ENCODE measurements at regions of chr12 and their contacts with region 1.

Region 1: DNA sequence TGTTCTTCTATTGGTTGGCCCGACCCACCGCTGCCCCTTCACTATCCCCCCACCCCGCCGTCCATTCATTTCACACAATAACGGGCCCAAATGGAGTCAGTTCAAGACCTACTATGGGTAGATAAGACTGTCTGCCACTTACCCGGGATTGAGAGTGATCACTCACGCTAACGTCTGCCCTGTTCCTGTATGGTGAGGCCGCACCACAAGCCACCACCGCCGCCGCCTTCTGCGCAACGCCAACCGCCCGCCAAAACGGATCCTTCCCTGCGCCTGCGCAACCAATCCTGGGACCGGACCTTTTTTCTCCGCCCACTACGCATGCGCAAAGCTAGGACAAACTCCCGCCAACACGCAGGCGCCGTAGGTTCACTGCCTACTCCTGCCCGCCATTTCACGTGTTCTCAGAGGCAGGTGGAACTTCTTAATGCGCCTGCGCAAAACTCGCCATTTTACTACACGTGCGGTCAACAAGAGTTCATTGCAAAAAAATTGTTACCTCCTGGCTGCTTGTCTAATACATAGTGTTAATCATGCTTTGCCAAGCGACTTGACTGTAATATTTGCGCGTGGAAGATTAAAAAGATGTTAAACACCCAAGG is at the start of gene CBX5:
- DNase-seq: peak; percentile 99
- H3K4me3 Mint-ChIP-seq: no peak within 1 kb of the TSS
- H3K27ac Mint-ChIP-seq: no peak within 1 kb of the TSS
- H3K4me1 Mint-ChIP-seq: peaks cover 23% of the 10 kb centered on the region
- H3K27me3 Mint-ChIP-seq: no peaks in the 10 kb centered on the region
- CTCF ChIP-seq: no peak
- total RNA-seq, gene CBX5: 109 and 112 TPM in 2 replicates

Region 2: DNA sequence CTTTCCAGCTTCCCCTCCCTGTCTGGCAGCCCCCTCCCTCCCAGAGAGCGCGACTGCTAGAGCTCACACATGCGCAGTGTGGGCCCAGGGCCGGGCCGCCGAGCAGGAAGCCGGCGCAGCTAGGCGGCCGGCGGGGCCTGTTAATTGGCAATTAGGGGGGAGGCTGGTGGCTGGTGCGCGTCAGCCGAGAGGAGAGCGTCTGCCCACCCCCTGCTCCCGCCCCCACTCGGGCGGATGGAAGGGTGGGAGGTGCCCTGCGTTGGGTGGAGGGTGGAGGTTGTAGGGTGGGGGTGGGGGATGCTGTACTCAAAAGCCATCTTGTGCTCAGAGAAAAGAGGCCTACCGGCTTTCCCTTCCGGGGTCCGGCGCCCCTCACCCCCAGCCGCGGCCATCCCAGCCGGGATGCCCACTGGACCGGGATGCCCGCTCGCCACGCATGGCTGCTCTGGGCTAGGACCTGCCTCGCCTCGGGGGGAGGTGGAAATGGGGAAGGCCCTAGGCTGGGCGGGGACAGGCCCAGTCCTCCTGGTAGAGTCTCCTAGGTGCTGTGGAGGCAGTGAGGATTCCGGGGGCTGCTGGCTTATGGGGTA is 262.0 kb before region 1 on chr12:
- CTCF ChIA-PET with region 1: no interaction called
- POLR2A ChIA-PET with region 1: interaction called, 13 read pairs
- intact Hi-C with region 1: no loop called
- DNase-seq: peak; percentile 96
- H3K4me3 Mint-ChIP-seq: peak overlapping the region; percentile 98
- H3K27ac Mint-ChIP-seq: peak overlapping the region; percentile 98
- H3K4me1 Mint-ChIP-seq: peaks cover 23% of the 10 kb centered on the region
- H3K27me3 Mint-ChIP-seq: no peaks in the 10 kb centered on the region
- CTCF ChIP-seq: no peak

Region 3: GRCh38 chr12:54229624-54230212 is 50.2 kb before region 1 on chr12:
- CTCF ChIA-PET with region 1: interaction called, 3 read pairs
- POLR2A ChIA-PET with region 1: interaction called, 13 read pairs
- intact Hi-C with region 1: loop called (anchors 5 kb)
- DNase-seq: peak; percentile 96
- H3K4me3 Mint-ChIP-seq: peak overlapping the region; percentile 0
- H3K27ac Mint-ChIP-seq: peak overlapping the region; percentile 83
- H3K4me1 Mint-ChIP-seq: peaks cover 17% of the 10 kb centered on the region
- H3K27me3 Mint-ChIP-seq: no peaks in the 10 kb centered on the region
- CTCF ChIP-seq: no peak

Region 4: GRCh38 chr12:54265364-54265812 is 14.6 kb before region 1 on chr12:
- CTCF ChIA-PET with region 1: interaction called, 7 read pairs
- POLR2A ChIA-PET with region 1: interaction called, 99 read pairs
- intact Hi-C with region 1: no loop called
- DNase-seq: no peak
- H3K4me3 Mint-ChIP-seq: no peak overlapping the region
- H3K27ac Mint-ChIP-seq: no peak overlapping the region
- H3K4me1 Mint-ChIP-seq: peaks cover 14% of the 10 kb centered on the region
- H3K27me3 Mint-ChIP-seq: no peaks in the 10 kb centered on the region
- CTCF ChIP-seq: no peak

Region 5: GRCh38 chr12:54306925-54307741 is 27.2 kb after region 1 on chr12:
- CTCF ChIA-PET with region 1: interaction called, 3 read pairs
- POLR2A ChIA-PET with region 1: interaction called, 10 read pairs
- intact Hi-C with region 1: no loop called
- DNase-seq: peak; percentile 99
- H3K4me3 Mint-ChIP-seq: no peak overlapping the region
- H3K27ac Mint-ChIP-seq: no peak overlapping the region
- H3K4me1 Mint-ChIP-seq: peaks cover 34% of the 10 kb centered on the region
- H3K27me3 Mint-ChIP-seq: no peaks in the 10 kb centered on the region
- CTCF ChIP-seq: no peak